ENCODE measurements at regions of chr6 and their contacts with region 1.

Region 1: GRCh38 chr6:166540631-166541331 is 45.7 kb downstream of the RAMACL start:
- DNase-seq: peak; percentile 86
- H3K4me3 Mint-ChIP-seq: peak overlapping the region; percentile 65
- H3K27ac Mint-ChIP-seq: peak overlapping the region; percentile 85
- H3K4me1 Mint-ChIP-seq: peaks cover 29% of the 10 kb centered on the region
- H3K27me3 Mint-ChIP-seq: no peaks in the 10 kb centered on the region

Region 2: DNA sequence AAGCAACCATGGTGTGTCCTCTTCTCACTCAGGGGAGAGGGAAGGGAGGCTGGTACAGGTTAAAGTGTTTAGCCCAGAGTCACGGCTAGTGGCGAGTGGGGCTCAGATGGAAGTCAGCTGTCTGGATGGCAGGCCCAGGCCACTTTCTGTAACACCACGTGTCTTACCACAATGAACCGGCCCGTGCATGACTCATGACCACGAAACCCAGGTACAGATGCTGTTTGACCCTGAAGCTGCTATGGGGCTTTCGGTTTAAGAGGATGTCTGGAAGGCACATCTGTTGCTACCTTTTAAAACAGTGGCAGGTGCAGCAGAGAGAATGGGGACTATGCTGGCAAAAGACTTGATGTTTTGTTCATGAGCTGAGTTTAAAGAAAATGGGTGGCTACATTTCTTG is 121.5 kb before region 1 on chr6:
- CTCF ChIA-PET with region 1: no interaction called
- POLR2A ChIA-PET with region 1: no interaction called
- intact Hi-C with region 1: loop called (anchors 1 kb)
- DNase-seq: peak; percentile 82
- H3K4me3 Mint-ChIP-seq: peak overlapping the region; percentile 4
- H3K27ac Mint-ChIP-seq: peak overlapping the region; percentile 73
- H3K4me1 Mint-ChIP-seq: peaks cover 62% of the 10 kb centered on the region
- H3K27me3 Mint-ChIP-seq: no peaks in the 10 kb centered on the region

Region 3: GRCh38 chr6:166499350-166500163 is 41.2 kb before region 1 on chr6:
- CTCF ChIA-PET with region 1: no interaction called
- POLR2A ChIA-PET with region 1: no interaction called
- intact Hi-C with region 1: loop called (anchors 1 kb)
- DNase-seq: peak; percentile 30
- H3K4me3 Mint-ChIP-seq: no peak overlapping the region
- H3K27ac Mint-ChIP-seq: peak overlapping the region; percentile 71
- H3K4me1 Mint-ChIP-seq: peaks cover 28% of the 10 kb centered on the region
- H3K27me3 Mint-ChIP-seq: no peaks in the 10 kb centered on the region

Region 4: GRCh38 chr6:166942393-166943168 is 401.8 kb after region 1 on chr6:
- CTCF ChIA-PET with region 1: no interaction called
- POLR2A ChIA-PET with region 1: no interaction called
- intact Hi-C with region 1: loop called (anchors 5 kb)
- DNase-seq: peak; percentile 91
- H3K4me3 Mint-ChIP-seq: peak overlapping the region; percentile 49
- H3K27ac Mint-ChIP-seq: peak overlapping the region; percentile 95
- H3K4me1 Mint-ChIP-seq: peaks cover 45% of the 10 kb centered on the region
- H3K27me3 Mint-ChIP-seq: no peaks in the 10 kb centered on the region

Measured in activated CD4-positive, alpha-beta memory T cell treated with anti-CD3 and anti-CD28 coated beads for 36 hours (primary cell).